ENCODE measurements at regions of chr1 and their contacts with region 1.

Region 1: GRCh38 chr1:20493839-20494608 is 8.0 kb upstream of the CAMK2N1 start:
- DNase-seq: peak; percentile 79
- H3K4me3 ChIP-seq: no peak overlapping the region
- H3K27ac ChIP-seq: peak overlapping the region; percentile 70
- H3K27me3 ChIP-seq: no peaks in the 10 kb centered on the region
- CTCF ChIP-seq: peak; percentile 99

Region 2: DNA sequence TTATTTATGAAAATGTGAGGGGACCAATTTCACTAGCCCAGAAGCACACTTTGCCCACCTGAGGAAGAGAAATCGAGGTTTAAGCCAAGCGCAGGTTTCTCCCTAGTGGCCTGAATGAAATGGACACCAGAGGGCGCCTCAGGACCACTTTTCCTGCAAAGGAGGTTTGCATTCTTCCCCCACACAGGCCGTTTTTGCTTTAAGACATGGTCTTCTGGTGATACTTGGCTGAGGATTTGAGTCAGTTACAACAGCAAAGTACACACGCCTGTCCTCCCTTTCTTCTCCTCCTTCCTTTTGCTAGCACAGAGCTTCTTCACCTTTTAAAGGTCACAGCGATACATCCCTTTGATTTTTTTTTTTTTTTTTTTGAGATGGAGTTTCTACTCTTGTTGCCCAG is 576.0 kb before region 1 on chr1:
- CTCF ChIA-PET with region 1: interaction called, 22 read pairs
- POLR2A ChIA-PET with region 1: interaction called, 6 read pairs
- DNase-seq: peak; percentile 60
- H3K4me3 ChIP-seq: no peak overlapping the region
- H3K27ac ChIP-seq: no peak overlapping the region
- H3K27me3 ChIP-seq: peaks cover 11% of the 10 kb centered on the region
- CTCF ChIP-seq: peak; percentile 96

Region 3: DNA sequence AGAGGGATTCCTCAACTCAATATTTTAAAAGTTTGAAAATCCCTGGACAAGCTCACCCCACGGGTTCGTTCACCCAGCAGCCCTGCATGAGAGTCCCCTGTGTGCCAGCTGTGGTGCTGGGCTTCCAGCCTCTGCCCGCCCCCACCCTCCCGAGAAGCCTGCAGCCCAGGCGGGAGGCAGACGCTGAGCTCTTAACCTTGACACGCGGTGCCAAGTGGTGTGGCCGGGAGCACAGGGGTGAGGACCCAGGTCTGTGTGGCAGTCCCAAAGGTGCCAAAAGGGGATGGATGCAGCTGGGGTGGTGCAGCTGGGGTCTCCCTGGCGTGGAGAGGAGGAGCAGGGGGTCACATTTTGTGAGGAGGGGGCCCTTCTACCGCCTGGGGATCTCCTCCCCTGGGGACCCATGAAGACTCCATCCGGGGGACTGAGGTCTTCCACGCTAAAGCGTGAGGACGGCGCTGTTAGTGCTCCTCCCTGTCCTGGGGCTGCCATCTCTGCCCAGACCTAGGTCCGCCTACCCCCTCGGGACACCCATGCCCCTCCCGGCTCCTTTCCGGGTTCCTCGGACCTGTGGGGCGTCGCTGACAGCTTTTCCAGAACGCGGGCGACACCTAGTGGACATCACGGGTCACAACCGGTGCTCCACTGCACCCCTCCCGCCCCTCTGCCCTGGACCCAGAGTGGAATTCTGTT is 342.0 kb before region 1 on chr1:
- CTCF ChIA-PET with region 1: interaction called, 17 read pairs
- POLR2A ChIA-PET with region 1: no interaction called
- DNase-seq: peak; percentile 33
- H3K4me3 ChIP-seq: peak overlapping the region; percentile 44
- H3K27ac ChIP-seq: no peak overlapping the region
- H3K27me3 ChIP-seq: peaks cover 11% of the 10 kb centered on the region
- CTCF ChIP-seq: peak; percentile 83

Region 4: GRCh38 chr1:20376880-20377494 is 117.0 kb before region 1 on chr1:
- CTCF ChIA-PET with region 1: interaction called, 10 read pairs
- POLR2A ChIA-PET with region 1: interaction called, 5 read pairs
- DNase-seq: no peak
- H3K4me3 ChIP-seq: no peak overlapping the region
- H3K27ac ChIP-seq: no peak overlapping the region
- H3K27me3 ChIP-seq: peaks cover 17% of the 10 kb centered on the region
- CTCF ChIP-seq: peak; percentile 88

Region 5: DNA sequence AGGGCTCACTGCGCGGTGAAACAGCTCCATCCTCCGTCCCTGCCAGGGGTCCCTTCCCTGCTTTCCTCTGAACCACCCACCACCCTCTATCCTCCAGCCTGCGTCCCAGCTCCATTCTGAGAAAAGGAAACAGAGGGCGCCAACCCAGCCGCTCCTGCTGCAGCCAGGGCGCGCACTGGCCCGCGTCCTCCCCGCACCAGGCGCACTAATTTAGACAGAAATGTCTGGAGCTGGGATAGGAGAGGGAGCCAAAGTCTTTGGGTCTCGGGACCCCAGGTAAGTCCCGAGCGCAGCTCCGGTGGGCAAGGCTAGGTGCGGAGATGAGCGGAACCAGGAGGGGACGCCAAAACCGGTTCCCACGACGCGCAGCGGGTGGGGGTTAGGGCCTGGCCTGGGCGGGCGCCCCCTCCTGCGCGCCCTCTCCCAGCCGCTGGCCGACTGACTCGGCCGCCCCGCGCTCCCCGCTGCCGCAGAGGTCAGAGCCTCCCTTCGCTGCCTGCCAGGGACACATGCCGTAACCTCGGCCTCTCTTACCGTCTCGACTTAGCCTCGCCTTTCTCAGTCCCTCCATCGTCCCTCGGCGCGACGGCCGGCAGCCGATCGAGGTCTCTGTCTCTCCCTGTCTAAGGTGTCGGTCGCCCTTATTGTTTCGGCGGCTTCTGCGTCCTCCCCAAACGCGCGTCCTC is 10.0 kb before region 1 on chr1:
- CTCF ChIA-PET with region 1: interaction called, 8 read pairs
- POLR2A ChIA-PET with region 1: interaction called, 16 read pairs
- DNase-seq: no peak
- H3K4me3 ChIP-seq: peak overlapping the region; percentile 88
- H3K27ac ChIP-seq: peak overlapping the region; percentile 68
- H3K27me3 ChIP-seq: peaks cover 2% of the 10 kb centered on the region
- CTCF ChIP-seq: no peak

Region 6: DNA sequence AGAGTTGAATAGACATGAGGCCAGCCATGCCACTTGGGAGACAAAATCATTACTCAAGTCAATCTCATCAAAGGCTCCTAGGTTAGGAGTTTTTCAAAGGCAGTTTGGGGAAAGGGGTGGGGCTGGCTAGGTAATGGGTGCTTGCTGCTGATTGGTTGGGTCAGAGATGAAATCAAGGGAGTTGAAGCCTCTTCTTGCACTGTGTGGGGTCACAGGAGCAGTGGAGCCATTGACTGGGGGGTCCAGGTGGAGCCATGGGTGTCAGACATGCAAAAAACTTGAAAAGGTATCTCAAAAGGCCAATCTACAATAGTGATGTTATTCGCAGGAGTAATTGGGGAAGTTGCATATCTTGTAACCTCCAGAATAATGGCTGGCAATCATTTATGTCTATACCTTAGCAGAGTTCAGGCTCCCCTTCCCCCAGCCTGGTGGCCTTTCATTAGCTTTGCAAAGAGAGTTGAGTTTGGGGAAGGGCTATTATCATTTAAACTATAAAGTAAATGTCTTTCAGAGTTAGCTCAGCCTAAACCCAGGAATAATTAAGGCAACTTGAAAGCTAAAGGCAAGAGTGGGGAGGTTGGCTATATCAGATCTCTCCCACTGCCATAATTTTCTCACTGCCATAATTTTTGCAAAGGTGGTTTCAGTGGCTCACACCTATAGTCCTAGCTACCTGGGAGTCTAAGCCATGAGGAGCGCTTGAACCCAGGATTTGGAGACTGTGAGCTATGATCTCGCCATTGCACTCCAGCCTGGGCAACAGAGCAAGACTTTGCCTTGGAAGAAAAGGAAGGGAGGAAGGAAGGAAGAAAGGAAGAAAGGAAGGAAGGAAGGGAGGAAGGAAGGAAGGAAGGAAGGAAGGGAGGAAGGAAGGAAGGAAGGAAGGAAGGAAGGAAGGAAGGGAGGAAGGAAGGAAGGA is 131.4 kb after region 1 on chr1:
- CTCF ChIA-PET with region 1: no interaction called
- POLR2A ChIA-PET with region 1: no interaction called
- DNase-seq: no peak
- H3K4me3 ChIP-seq: no peak overlapping the region
- H3K27ac ChIP-seq: no peak overlapping the region
- H3K27me3 ChIP-seq: no peaks in the 10 kb centered on the region
- CTCF ChIP-seq: no peak

Region 7: GRCh38 chr1:21216835-21217811 is 723.1 kb after region 1 on chr1:
- CTCF ChIA-PET with region 1: no interaction called
- POLR2A ChIA-PET with region 1: no interaction called
- DNase-seq: no peak
- H3K4me3 ChIP-seq: no peak overlapping the region
- H3K27ac ChIP-seq: peak overlapping the region; percentile 21
- H3K27me3 ChIP-seq: no peaks in the 10 kb centered on the region
- CTCF ChIP-seq: peak; percentile 73